ENCODE measurements at regions of chr9 and their contacts with region 1.

Region 1: GRCh38 chr9:122092611-122093506 is at the start of gene TTLL11:
- DNase-seq: peak; percentile 99
- ATAC-seq: peak; percentile 95
- H3K4me3 Mint-ChIP-seq: peak within 1 kb of the TSS; percentile 78
- H3K27ac Mint-ChIP-seq: peak within 1 kb of the TSS; percentile 8
- H3K4me1 Mint-ChIP-seq: peaks cover 29% of the 10 kb centered on the region
- H3K27me3 Mint-ChIP-seq: peaks cover 5% of the 10 kb centered on the region
- total RNA-seq, gene TTLL11: 1.3 to 1.8 TPM

Region 2: GRCh38 chr9:120579750-120580590 is 1512.9 kb before region 1 on chr9 and contains the start of gene CDK5RAP2:
- CTCF ChIA-PET with region 1: interaction called, 3 read pairs
- POLR2A ChIA-PET with region 1: no interaction called
- intact Hi-C with region 1: loop called in 1 of 2 experiments (anchors 2 kb)
- DNase-seq: peak; percentile 96
- ATAC-seq: peak; percentile 99
- H3K4me3 Mint-ChIP-seq: peak within 1 kb of the TSS; percentile 99
- H3K27ac Mint-ChIP-seq: peak within 1 kb of the TSS; percentile 94
- H3K4me1 Mint-ChIP-seq: peaks cover 40% of the 10 kb centered on the region
- H3K27me3 Mint-ChIP-seq: no peaks in the 10 kb centered on the region
- total RNA-seq, gene CDK5RAP2: 68.8 to 85.8 TPM

Region 3: GRCh38 chr9:122159026-122159924 is 66.4 kb after region 1 on chr9 and contains the starts of genes MORN5 and NDUFA8:
- CTCF ChIA-PET with region 1: interaction called, 10 read pairs
- POLR2A ChIA-PET with region 1: no interaction called
- intact Hi-C with region 1: loop called (anchors 1 to 2 kb)
- DNase-seq: peak; percentile 98
- ATAC-seq: peak; percentile 97
- H3K4me3 Mint-ChIP-seq: peak within 1 kb of the TSS; percentile 95
- H3K27ac Mint-ChIP-seq: peak within 1 kb of the TSS; percentile 96
- H3K4me1 Mint-ChIP-seq: peaks cover 33% of the 10 kb centered on the region
- H3K27me3 Mint-ChIP-seq: peaks cover 13% of the 10 kb centered on the region
- total RNA-seq, gene MORN5: not detected
- total RNA-seq, gene NDUFA8: 50.4 to 57.2 TPM

Region 4: DNA sequence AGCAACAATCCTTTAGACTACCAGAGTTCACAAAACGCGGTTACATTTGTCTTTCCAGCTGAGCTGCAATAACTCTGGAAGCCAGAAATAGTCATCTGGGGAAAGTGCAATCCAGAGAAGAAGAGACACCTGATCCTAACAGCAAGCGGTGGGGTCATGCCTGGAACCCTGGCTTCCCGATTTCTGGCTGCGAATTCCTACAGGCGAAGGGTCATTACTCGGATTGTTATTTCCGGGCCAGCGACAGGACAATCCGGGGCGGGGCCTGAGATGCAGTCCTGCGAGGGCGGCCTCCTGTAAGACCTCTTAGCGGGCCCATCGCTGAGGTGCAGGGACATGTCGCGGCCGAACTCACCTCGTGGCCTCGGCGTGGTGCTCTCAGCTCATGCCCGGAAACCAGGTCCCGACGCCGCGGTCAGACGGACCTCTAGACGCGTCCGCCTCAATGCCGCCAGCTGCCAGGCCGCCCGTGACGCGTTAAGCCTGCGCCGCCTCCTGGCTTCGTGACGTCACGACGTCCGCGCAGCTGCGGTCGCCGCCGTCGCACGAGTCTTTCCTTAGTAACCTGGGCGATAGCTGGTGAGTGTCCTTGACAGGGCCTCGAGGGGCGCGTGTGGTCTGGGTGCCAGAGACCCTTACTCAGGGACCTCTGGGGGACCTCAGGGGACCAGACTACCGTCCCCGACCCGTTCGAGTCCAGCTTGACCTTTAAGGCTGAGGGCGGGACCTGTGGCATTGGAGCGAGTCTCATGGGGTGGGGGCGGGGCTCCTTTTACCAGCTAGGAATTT is 171.7 kb after region 1 on chr9 and contains the starts of genes MRRF and RBM18:
- CTCF ChIA-PET with region 1: interaction called, 3 read pairs
- POLR2A ChIA-PET with region 1: no interaction called
- intact Hi-C with region 1: loop called in 1 of 2 experiments (anchors 1 kb)
- DNase-seq: peak; percentile 93
- ATAC-seq: peak; percentile 83
- H3K4me3 Mint-ChIP-seq: peak within 1 kb of the TSS; percentile 98
- H3K27ac Mint-ChIP-seq: peak within 1 kb of the TSS; percentile 99
- H3K4me1 Mint-ChIP-seq: peaks cover 44% of the 10 kb centered on the region
- H3K27me3 Mint-ChIP-seq: no peaks in the 10 kb centered on the region
- total RNA-seq, gene MRRF: 57.3 to 61.5 TPM
- total RNA-seq, gene RBM18: 22.3 to 28.6 TPM

Region 5: DNA sequence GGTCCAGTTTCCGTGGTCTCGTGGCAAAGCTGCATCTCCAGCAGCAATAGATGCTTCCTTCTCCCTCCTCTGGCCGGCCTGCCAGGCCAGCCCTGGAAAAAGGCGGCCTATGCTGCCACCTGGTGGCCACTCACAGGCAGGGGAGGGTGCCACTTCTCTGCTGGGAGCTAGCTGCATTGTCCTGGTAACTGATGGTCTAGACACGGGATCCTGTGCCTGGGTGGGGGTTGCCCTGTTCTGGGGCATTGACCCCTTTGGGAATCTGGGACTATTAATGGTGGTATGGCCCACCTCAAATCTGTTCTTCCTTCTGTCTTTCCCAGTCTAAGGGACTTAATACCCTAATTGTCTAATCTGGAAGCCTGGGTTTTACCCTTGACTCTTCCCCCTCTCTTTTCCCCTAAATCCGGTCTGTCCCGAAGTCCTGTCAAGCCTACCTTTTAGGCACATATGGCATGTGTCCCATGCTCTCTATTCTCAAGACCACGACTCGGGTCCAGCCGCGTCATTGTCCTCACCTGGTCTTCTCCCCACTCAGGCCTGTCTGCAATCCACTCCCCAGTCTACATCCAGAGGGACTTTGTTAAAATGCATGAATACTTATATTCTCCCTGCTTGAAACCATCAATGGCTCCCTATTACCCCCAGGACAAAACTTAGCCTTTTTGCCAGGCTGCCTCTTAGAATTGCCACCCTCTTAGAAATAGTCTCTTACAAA is 257.9 kb after region 1 on chr9:
- CTCF ChIA-PET with region 1: interaction called, 146 read pairs
- POLR2A ChIA-PET with region 1: no interaction called
- intact Hi-C with region 1: loop called in 1 of 2 experiments (anchors 1 kb)
- DNase-seq: peak; percentile 89
- ATAC-seq: peak; percentile 90
- H3K4me3 Mint-ChIP-seq: no peak overlapping the region
- H3K27ac Mint-ChIP-seq: no peak overlapping the region
- H3K4me1 Mint-ChIP-seq: peaks cover 7% of the 10 kb centered on the region
- H3K27me3 Mint-ChIP-seq: peaks cover 26% of the 10 kb centered on the region

Region 6: DNA sequence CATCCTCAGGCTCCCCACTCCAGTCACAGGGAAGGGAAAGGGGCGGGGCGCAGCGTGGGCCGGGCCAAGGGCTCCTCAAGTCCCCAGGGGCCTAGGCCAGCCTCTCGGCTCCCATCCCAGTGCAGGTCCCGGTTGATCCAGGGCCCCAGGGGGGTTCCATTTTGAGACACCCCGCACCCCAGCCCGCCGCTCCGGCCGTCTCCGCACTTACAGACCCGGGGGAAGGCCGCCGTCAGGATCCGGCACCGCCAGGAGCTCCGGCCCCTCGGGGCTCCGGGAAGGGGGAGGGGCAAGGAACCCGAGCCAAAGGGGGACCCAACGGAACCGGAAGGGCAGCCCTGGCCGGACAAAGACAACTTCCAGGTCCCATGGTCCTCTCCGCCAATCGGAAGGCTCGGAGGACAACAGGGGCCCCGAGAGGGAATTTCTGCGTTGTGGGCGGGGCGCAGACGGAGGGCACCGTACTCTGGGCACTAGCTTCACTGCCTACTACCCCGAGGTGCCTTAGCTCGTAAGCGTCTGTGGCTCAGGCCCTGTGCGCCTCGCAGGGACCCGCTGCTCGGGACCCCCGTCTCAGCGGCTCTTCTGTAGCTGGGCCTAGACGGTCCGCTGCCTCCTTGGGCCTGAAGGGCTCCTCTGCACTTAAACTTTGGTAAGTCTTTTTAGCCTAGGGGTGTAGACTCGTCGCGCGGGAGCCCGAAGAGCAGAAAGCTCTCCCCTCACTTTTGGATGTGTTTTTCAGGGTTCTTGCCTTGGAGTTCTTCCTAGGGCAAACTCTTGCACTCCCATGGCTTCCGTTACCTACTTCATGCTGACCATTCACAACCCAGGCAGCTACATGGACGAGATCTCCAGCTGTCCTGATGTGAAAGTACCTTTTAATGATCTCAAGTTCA is 838.6 kb after region 1 on chr9 and contains the start of gene ZBTB26:
- CTCF ChIA-PET with region 1: no interaction called
- POLR2A ChIA-PET with region 1: no interaction called
- intact Hi-C with region 1: loop called in 1 of 2 experiments (anchors 10 kb)
- DNase-seq: peak; percentile 95
- ATAC-seq: peak; percentile 99
- H3K4me3 Mint-ChIP-seq: no peak within 1 kb of the TSS
- H3K27ac Mint-ChIP-seq: peak within 1 kb of the TSS; percentile 98
- H3K4me1 Mint-ChIP-seq: peaks cover 12% of the 10 kb centered on the region
- H3K27me3 Mint-ChIP-seq: no peaks in the 10 kb centered on the region
- total RNA-seq, gene ZBTB26: 6.0 TPM

Measured in activated CD4-positive, alpha-beta T cell treated with anti-CD3 and anti-CD28 coated beads for 36 hours (primary cell).